ENCODE measurements at regions of chr15 and their contacts with region 1.

Region 1: GRCh38 chr15:96701443-96701842 is 370.9 kb downstream of the NR2F2 start:
- DNase-seq: no peak
- ATAC-seq: no peak
- H3K4me3 ChIP-seq: no peak overlapping the region
- H3K27ac ChIP-seq: no peak overlapping the region
- H3K4me1 ChIP-seq: no peaks in the 10 kb centered on the region
- H3K27me3 ChIP-seq: no peaks in the 10 kb centered on the region
- CTCF ChIP-seq: no peak; a peak in 1 of 6 replicates
- EP300 ChIP-seq: no peak
- POLR2A ChIP-seq: no peak
- RAD21 ChIP-seq: no peak

Region 2: GRCh38 chr15:97248376-97248775 is 546.9 kb after region 1 on chr15:
- CTCF ChIA-PET with region 1: interaction called, 5 read pairs
- POLR2A ChIA-PET with region 1: no interaction called
- RAD21 ChIA-PET with region 1: interaction called, 7 read pairs
- SMC1A ChIA-PET with region 1: no interaction called
- in situ Hi-C with region 1: no loop called
- intact Hi-C with region 1: loop called (anchors 10 kb)
- DNase-seq: no peak
- ATAC-seq: no peak
- H3K4me3 ChIP-seq: no peak overlapping the region
- H3K27ac ChIP-seq: no peak overlapping the region
- H3K4me1 ChIP-seq: no peaks in the 10 kb centered on the region
- H3K27me3 ChIP-seq: no peaks in the 10 kb centered on the region
- CTCF ChIP-seq: no peak
- EP300 ChIP-seq: no peak
- POLR2A ChIP-seq: no peak
- RAD21 ChIP-seq: no peak

Measured in GM12878 (cell line).